Posterior cingulate gyrus (tissue), 11 donors: ENCODE measurements at regions of chr17 and their contacts with region 1.

Region 1: GRCh38 chr17:38557836-38558727 is 47.7 kb downstream of the SRCIN1 start:
- DNase-seq: peak; percentile 85 to 99 (median 90)

Region 2: GRCh38 chr17:38509008-38509771 is 48.9 kb before region 1 on chr17:
- intact Hi-C with region 1: no loop called
- DNase-seq: peak; percentile 60 to 97 (median 78)

Region 3: GRCh38 chr17:38544839-38545209 is 13.3 kb before region 1 on chr17:
- intact Hi-C with region 1: no loop called
- DNase-seq: peak in 1 of 10 donors; percentile 84

Region 4: GRCh38 chr17:38591759-38592241 is 33.7 kb after region 1 on chr17:
- intact Hi-C with region 1: no loop called
- DNase-seq: peak in 5 of 10 donors; percentile 48 to 91 (median 68)

Region 5: GRCh38 chr17:38605888-38606645 is 48.0 kb after region 1 on chr17 and contains the start of gene SRCIN1:
- intact Hi-C with region 1: loop called (anchors 10 kb)
- DNase-seq: peak; percentile 51 to 96 (median 70)

Region 6: DNA sequence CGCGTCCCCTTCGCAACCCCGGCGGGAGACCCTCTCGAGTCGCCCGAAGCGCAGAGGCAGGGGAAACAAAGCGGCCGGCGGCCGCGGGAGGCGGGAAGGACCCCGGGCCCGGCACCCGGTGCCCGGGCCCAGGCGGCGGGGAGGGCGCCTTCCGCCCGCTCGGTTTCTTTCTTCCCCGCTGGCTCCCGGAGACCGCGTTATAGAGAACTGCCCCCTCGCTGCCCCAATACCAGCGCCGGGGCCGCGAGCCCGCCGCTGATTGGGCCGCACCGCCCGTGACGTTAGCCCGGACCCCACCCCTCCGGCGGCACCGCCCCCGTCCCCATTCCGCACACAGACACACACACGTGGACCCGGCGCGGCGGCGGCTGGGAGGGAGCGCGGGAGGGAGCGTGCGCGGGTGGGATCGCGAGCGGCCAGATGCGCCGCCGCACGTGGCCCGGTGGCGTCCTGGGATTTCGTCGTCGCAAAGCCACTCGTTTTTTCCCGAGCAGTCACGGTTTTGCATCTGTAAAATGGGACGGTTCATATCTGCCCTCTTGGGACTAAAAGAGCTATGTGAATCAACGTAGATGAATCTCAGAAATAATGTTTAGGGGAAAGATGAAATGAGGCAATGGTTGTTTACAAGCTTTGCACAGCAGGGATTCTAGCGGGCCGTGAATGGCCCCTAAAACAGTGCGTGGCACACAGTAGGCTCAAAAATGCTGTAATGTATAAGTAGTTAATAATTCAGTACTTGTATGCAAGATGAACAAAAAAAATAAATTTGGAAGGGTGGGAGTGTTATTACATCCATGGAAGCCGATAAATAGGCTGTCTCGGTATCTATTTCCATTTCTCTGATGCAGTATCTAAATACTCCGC is 116.9 kb after region 1 on chr17 and contains the start of gene EPOP:
- intact Hi-C with region 1: no loop called
- DNase-seq: peak; percentile 69 to 99 (median 92)